ENCODE measurements at regions of chr11 and their contacts with region 1.

Region 1: GRCh38 chr11:9573052-9573774 is at the start of gene WEE1:
- DNase-seq: peak; percentile 94 to 96
- ATAC-seq: peak; percentile 77 to 82
- H3K4me3 ChIP-seq: peak within 1 kb of the TSS; percentile 58 to 91 (median 81)
- H3K27ac ChIP-seq: peak within 1 kb of the TSS; percentile 89 to 97 (median 96)
- H3K4me1 ChIP-seq: peaks cover 12 to 21% of the 10 kb centered on the region in 2 donors
- H3K27me3 ChIP-seq: no peaks in the 10 kb centered on the region
- CTCF ChIP-seq: no peak
- POLR2A ChIP-seq: peak; percentile 81 to 90
- total RNA-seq, gene WEE1: 6.8 to 16.2 (median 10.6) TPM

Region 2: GRCh38 chr11:9460322-9461067 is 112.7 kb before region 1 on chr11 and contains the start of gene ZNF143:
- in situ Hi-C with region 1: no loop called
- intact Hi-C with region 1: loop called (anchors 5 kb)
- DNase-seq: peak; percentile 100
- ATAC-seq: peak; percentile 92 to 95
- H3K4me3 ChIP-seq: peak within 1 kb of the TSS; percentile 87 to 100 (median 96)
- H3K27ac ChIP-seq: peak within 1 kb of the TSS; percentile 98 to 100 (median 100)
- H3K4me1 ChIP-seq: peaks cover 20 to 27% of the 10 kb centered on the region in 2 donors
- H3K27me3 ChIP-seq: no peaks in the 10 kb centered on the region
- CTCF ChIP-seq: peak in 3 of 5 experiments; percentile 19 to 69 (median 42)
- POLR2A ChIP-seq: peak; percentile 88 to 94
- total RNA-seq, gene ZNF143: 33.3 to 42.6 (median 36.9) TPM

Region 3: GRCh38 chr11:9534791-9535781 is 38.1 kb before region 1 on chr11:
- in situ Hi-C with region 1: no loop called
- intact Hi-C with region 1: loop called (anchors 2 kb)
- DNase-seq: peak; percentile 44 to 82
- ATAC-seq: peak; percentile 82 to 93
- H3K4me3 ChIP-seq: no peak overlapping the region
- H3K27ac ChIP-seq: peak overlapping the region in 3 of 4 donors; percentile 36 to 70 (median 61)
- H3K4me1 ChIP-seq: no peaks in the 10 kb centered on the region
- H3K27me3 ChIP-seq: no peaks in the 10 kb centered on the region
- CTCF ChIP-seq: peak; percentile 54 to 84 (median 76)
- POLR2A ChIP-seq: no peak